Ovary (tissue), 10 donors: ENCODE measurements at regions of chr1 and their contacts with region 1.

Region 1: DNA sequence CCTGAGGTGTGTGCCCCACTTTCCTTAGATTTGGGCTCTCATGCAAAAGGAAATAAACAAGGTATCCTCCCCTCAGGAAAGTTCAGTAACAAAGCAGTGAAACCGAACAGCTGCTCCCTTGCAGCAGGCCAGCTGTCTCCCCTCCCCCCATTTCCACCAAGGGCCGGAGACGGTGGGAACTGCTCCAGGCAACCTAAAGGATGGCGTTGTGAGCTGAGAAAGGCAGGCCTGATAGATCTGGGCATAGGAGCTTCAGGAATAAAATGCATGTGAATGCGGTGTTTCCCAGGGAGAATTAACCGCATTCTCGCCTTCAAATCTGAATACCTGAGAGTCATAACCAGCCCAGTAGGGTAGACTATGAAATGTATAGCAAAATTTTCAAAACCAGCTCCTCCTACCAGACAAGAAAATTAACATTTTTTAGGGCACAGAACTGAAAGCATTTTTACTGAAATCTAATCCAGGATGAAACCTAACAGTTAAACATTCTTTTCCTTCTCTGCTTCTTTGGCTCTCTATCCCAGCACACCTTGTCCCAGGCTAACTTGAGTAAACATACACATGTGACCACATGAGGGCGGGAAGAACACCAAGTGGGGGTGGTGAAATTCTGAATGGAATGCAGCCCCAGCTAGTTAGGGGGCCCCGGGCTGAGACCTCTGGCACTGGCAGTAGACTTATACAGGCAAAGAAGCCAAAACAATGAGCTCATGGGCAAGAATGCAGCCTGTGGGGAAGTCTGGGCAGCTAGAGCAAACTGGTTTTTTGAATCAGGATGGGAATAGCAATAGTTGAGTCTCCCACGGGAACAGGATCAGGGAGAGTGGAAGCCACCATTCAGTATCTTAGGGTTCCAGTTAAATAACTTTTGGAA is 11.5 kb downstream of the MCL1 start:
- DNase-seq: peak; percentile 84 to 94 (median 91)
- H3K4me3 ChIP-seq: peak overlapping the region; percentile 27
- H3K27ac ChIP-seq: peak overlapping the region; percentile 65 to 91
- H3K4me1 ChIP-seq: peaks cover 46% of the 10 kb centered on the region
- H3K27me3 ChIP-seq: no peaks in the 10 kb centered on the region
- CTCF ChIP-seq: no peak
- EP300 ChIP-seq: peak; percentile 83
- POLR2A ChIP-seq: no peak

Region 2: GRCh38 chr1:150106341-150106740 is 461.6 kb before region 1 on chr1:
- intact Hi-C with region 1: no loop called
- DNase-seq: no peak
- H3K4me3 ChIP-seq: no peak overlapping the region
- H3K27ac ChIP-seq: no peak overlapping the region
- H3K4me1 ChIP-seq: no peaks in the 10 kb centered on the region
- H3K27me3 ChIP-seq: no peaks in the 10 kb centered on the region
- CTCF ChIP-seq: no peak
- EP300 ChIP-seq: no peak
- POLR2A ChIP-seq: no peak

Region 3: DNA sequence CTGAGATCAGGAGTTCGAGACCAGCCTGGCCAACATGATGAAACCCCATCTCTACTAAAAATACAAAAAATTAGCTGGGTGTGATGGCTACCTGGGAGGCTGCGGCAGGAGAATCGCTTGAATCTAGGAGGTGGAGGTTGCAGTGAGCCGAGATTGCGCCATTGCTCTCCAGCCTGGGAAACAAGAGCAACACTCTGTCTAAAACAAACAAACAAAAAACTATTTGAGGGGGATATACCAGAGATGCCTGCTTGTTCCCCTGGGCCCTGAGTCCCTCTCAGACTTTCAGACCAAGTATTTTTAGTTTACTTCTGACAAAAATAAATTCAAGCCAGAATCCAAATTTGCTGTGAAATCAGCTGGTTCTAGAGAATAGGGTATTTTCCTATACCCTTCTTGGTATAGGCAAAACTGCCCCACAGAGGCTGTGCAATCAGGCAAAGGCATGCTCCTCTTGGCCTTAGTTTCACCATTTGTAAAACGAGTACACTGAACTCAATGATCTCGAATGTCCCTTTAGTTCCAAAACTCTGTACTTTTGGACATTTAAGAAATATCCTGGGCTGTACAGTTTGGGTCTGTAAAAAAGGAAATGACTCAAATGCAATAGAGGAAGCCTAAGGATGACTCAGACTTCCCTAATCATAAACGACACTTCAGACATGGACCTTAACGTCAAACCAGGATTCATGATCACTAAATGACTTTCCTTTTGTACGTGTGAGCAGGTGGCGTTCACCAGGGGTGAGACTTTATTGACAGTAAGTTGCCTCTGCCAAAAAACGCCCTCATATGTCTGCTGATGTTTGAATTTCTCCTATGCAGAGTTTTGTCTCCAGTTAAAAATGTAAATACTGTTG is 45.3 kb after region 1 on chr1:
- intact Hi-C with region 1: loop called in 1 of 4 experiments (anchors 5 kb)
- DNase-seq: no peak
- H3K4me3 ChIP-seq: no peak overlapping the region
- H3K27ac ChIP-seq: peak overlapping the region; percentile 22 to 33
- H3K4me1 ChIP-seq: peaks cover 12% of the 10 kb centered on the region
- H3K27me3 ChIP-seq: no peaks in the 10 kb centered on the region
- CTCF ChIP-seq: no peak
- EP300 ChIP-seq: no peak
- POLR2A ChIP-seq: no peak